Naive thymus-derived CD4-positive, alpha-beta T cell (primary cell): ENCODE measurements at regions of chr6 and their contacts with region 1.

Region 1: GRCh38 chr6:107033126-107033525 is 5.1 kb downstream of the MTRES1 start:
- DNase-seq: no peak
- ATAC-seq: no peak
- H3K4me3 ChIP-seq: no peak overlapping the region
- H3K4me3 Mint-ChIP-seq: no peak overlapping the region
- H3K27ac ChIP-seq: no peak overlapping the region
- H3K27ac Mint-ChIP-seq: peak overlapping the region in 1 of 9 donors; percentile 24
- H3K4me1 ChIP-seq: peaks cover 3 to 17% of the 10 kb centered on the region in 2 donors
- H3K4me1 Mint-ChIP-seq: peaks cover 22 to 56% (median 46%) of the 10 kb centered on the region in 7 donors
- H3K27me3 ChIP-seq: no peaks in the 10 kb centered on the region
- H3K27me3 Mint-ChIP-seq: no peaks in the 10 kb centered on the region

Region 2: GRCh38 chr6:106360410-106360988 is 672.6 kb before region 1 on chr6 and contains the start of gene CRYBG1:
- CTCF ChIA-PET with region 1: no interaction called
- POLR2A ChIA-PET with region 1: no interaction called
- intact Hi-C with region 1: loop called in 1 of 2 experiments (anchors 1 kb)
- DNase-seq: peak; percentile 60 to 75 (median 72)
- ATAC-seq: peak; percentile 95
- H3K4me3 ChIP-seq: peak within 1 kb of the TSS; percentile 45
- H3K4me3 Mint-ChIP-seq: peak within 1 kb of the TSS; percentile 71 to 86 (median 78)
- H3K27ac ChIP-seq: no peak within 1 kb of the TSS
- H3K27ac Mint-ChIP-seq: peak within 1 kb of the TSS in 2 of 9 donors; percentile 15 to 43
- H3K4me1 ChIP-seq: peaks cover 7 to 8% of the 10 kb centered on the region in 2 donors
- H3K4me1 Mint-ChIP-seq: peaks cover 5 to 15% (median 10%) of the 10 kb centered on the region in 7 donors
- H3K27me3 ChIP-seq: peaks cover 3 to 20% of the 10 kb centered on the region in 2 donors
- H3K27me3 Mint-ChIP-seq: peaks cover 34 to 62% (median 55%) of the 10 kb centered on the region in 5 donors
- total RNA-seq, gene CRYBG1: 18.0 to 39.8 (median 34.6) TPM

Region 3: DNA sequence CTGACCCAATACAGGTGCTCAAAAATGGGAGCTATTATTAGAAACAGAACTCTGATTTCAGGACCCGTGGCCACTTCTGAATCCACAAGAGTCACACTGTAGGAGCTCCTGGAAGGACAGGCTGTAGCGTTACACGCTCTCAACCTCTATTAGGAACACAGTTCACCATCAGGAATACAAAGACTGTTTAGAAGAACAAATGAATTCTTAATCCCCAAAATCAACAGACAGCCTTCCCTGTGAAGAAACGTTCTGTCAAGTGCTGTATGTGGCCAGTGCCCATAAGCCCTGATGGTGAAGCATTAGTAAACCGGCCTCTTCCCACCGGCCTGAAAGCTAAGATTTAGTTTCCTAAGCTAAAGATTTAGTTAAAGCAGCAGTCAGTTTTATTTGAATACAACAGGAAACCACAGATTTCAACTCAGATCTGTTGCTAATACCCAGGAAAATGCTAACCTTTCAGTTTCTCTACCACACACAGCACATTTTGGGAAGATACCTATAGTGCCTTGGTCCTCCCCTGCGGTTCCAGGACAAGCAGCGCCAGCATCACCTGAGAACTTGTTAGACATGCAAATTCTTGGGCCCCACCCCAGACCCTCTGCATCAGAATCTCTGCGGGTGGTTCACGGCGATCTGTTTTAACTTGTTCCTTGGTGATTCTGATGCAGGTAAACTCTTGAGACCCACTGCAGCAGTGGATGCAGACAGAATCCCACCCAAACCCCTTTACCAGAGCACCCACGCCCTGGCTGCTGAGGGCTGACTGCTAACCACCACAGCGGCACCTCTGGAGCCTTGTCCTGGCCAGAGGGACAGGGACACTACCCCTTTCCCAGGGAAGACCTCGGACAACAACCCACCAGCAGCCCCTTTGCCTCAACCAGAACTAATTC is 28.2 kb after region 1 on chr6:
- CTCF ChIA-PET with region 1: no interaction called
- POLR2A ChIA-PET with region 1: no interaction called
- intact Hi-C with region 1: loop called in 1 of 2 experiments (anchors 1 kb)
- DNase-seq: peak in 3 of 9 donors; percentile 3 to 18 (median 5)
- ATAC-seq: peak; percentile 59
- H3K4me3 ChIP-seq: peak overlapping the region; percentile 14
- H3K4me3 Mint-ChIP-seq: peak overlapping the region; percentile 59 to 81 (median 78)
- H3K27ac ChIP-seq: no peak overlapping the region
- H3K27ac Mint-ChIP-seq: peak overlapping the region in 8 of 9 donors; percentile 32 to 82 (median 54)
- H3K4me1 ChIP-seq: peaks cover 4 to 11% of the 10 kb centered on the region in 2 donors
- H3K4me1 Mint-ChIP-seq: peaks cover 10 to 50% (median 31%) of the 10 kb centered on the region in 7 donors
- H3K27me3 ChIP-seq: no peaks in the 10 kb centered on the region
- H3K27me3 Mint-ChIP-seq: no peaks in the 10 kb centered on the region

Region 4: DNA sequence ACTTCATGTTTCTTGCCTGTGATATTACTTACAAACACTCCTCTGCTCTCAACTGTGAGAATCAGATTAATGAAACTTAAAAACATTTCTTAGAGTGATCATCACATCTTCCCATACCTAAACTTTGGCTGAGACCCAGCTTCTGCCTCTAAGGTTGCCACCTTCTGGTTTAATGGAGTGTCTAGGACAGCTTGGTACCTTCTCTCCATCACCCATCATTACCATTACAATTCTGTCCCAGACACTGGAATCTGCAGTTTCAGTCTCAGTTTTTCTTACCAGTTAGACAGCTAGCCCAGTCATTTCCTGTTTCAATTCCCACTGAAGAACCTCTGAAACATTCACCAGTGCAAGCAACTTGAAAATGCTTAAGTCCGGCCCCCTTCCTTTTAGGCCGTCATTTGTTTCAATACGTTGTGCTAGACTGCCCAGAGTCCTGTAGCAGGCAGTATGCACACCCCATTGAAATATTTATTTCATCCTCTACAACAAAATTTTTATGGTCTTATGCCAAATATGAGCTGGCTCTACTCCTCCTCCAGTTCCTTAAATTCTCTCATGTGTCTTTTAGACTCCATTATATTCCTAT is 1420.6 kb after region 1 on chr6:
- CTCF ChIA-PET with region 1: no interaction called
- POLR2A ChIA-PET with region 1: no interaction called
- intact Hi-C with region 1: no loop called
- DNase-seq: no peak
- ATAC-seq: peak; percentile 31
- H3K4me3 ChIP-seq: no peak overlapping the region
- H3K4me3 Mint-ChIP-seq: no peak overlapping the region
- H3K27ac ChIP-seq: no peak overlapping the region
- H3K27ac Mint-ChIP-seq: no peak overlapping the region
- H3K4me1 ChIP-seq: no peaks in the 10 kb centered on the region
- H3K4me1 Mint-ChIP-seq: peaks cover 0 to 9% (median 3%) of the 10 kb centered on the region in 7 donors
- H3K27me3 ChIP-seq: no peaks in the 10 kb centered on the region
- H3K27me3 Mint-ChIP-seq: peaks cover 0 to 46% (median 4%) of the 10 kb centered on the region in 5 donors